ENCODE measurements at regions of chr1 and their contacts with region 1.

Region 1: DNA sequence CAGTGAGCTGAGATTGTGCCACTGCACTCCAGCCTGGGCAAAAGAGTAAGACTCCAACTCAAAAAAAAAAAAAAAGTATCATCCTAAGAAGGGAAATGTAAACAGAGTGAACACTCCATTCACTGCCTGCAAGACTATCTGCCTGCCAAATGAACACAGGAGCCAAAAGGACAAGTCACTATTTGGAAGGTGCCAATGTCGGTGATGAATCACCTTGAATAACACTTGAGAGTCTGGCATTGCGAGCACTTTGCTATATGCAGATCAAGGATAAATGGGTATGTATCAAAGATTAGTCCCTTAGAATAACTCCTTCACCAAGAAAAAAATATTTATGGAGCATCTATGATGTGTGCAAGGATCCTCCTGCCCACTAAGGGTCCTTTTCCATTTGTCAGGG is 6.6 kb downstream of the UBR4 start:
- DNase-seq: no peak
- ATAC-seq: peak; percentile 43
- H3K4me3 ChIP-seq: no peak overlapping the region
- H3K27ac ChIP-seq: peak overlapping the region in 1 of 2 donors; percentile 57
- H3K4me1 ChIP-seq: peaks cover 0 to 3% of the 10 kb centered on the region in 2 donors
- H3K27me3 ChIP-seq: no peaks in the 10 kb centered on the region

Region 2: GRCh38 chr1:19123837-19124236 is 79.6 kb before region 1 on chr1:
- intact Hi-C with region 1: no loop called
- DNase-seq: no peak
- ATAC-seq: no peak
- H3K4me3 ChIP-seq: no peak overlapping the region
- H3K27ac ChIP-seq: no peak overlapping the region
- H3K4me1 ChIP-seq: no peaks in the 10 kb centered on the region
- H3K27me3 ChIP-seq: no peaks in the 10 kb centered on the region

Region 3: DNA sequence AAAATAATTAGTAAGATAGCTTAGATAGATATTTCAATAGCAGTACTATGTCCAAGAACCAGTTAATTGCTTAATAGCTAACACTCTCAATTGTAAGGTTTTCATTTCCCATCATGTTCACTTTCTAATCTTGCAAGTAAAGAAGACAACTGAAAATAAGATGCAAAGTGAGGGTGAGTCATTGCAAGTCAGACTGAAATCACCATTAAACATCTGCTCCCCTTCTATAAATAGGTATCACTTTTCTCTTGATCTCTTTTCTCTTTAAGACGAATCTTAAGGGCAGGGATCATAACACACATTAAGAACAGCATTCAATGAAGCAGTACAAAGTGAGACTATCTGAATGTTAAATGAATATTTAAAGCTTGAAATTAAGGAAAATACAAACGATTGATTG is 33.8 kb before region 1 on chr1:
- intact Hi-C with region 1: no loop called
- DNase-seq: no peak
- ATAC-seq: no peak
- H3K4me3 ChIP-seq: no peak overlapping the region
- H3K27ac ChIP-seq: no peak overlapping the region
- H3K4me1 ChIP-seq: no peaks in the 10 kb centered on the region
- H3K27me3 ChIP-seq: no peaks in the 10 kb centered on the region

Region 4: DNA sequence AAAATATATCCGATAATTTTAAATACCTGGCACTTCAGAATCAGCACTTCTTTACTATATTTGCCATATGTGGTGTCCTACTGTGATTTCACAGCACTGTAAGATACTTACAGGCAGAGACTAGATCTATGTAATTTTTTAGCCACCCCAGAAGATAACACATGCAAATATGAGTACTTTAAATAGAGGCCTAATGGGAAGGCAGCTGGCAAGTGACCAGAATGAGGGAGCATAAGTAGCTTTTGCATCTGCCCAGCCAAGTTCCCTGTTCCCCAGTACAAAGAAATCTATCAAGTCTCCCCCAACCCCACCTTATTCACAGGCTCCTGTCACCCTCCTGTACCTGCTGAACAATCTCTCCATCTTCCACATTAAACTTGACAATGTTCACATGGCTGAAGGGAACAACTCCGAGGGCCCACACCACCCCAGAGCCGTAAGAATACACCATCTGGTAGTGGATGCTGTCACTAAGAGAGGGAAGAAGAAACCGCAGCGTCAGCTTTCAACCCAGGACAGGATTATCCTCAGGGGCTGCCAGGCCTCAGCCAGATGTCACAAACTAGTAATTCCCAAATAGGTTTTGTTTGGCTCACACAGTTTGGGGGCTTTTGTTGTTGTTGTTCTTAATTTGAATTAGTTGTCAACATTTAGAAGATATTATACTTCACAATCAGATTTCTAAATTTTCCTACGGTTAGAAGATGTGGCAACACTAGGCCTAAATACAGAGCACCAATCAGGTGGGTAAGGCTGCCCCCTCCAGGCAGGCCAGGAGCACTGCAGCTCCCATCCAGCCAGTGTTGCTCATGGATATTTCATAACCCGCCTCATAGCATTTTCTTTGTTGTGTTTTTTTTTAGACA is 37.5 kb after region 1 on chr1:
- intact Hi-C with region 1: loop called in 1 of 2 experiments (anchors 5 kb)
- DNase-seq: peak; percentile 64 to 83
- ATAC-seq: peak; percentile 87
- H3K4me3 ChIP-seq: no peak overlapping the region
- H3K27ac ChIP-seq: no peak overlapping the region
- H3K4me1 ChIP-seq: no peaks in the 10 kb centered on the region
- H3K27me3 ChIP-seq: no peaks in the 10 kb centered on the region

Region 5: DNA sequence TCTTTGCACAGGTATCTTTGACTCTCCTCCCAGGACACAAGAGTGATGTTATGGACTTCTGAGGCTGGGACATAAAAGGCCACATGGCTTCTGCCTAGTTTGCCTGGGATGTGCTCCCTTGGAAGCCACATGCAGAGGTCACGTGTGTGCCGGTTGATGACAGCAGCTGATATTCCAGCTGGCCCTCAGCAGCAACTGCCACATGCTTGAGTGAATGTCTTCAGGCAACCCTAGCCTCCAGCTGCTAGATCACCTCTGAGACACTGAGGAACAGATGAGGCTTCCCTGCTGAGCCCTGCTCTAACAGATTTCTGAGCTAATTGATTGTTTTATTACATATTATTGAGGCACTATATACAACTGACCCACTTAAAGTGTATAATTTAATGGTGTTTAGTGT is 96.8 kb after region 1 on chr1:
- intact Hi-C with region 1: no loop called
- DNase-seq: no peak
- ATAC-seq: no peak
- H3K4me3 ChIP-seq: no peak overlapping the region
- H3K27ac ChIP-seq: no peak overlapping the region
- H3K4me1 ChIP-seq: no peaks in the 10 kb centered on the region
- H3K27me3 ChIP-seq: no peaks in the 10 kb centered on the region

Measured in aorta (tissue), 5 donors.